ENCODE measurements at regions of chr3 and their contacts with region 1.

Region 1: DNA sequence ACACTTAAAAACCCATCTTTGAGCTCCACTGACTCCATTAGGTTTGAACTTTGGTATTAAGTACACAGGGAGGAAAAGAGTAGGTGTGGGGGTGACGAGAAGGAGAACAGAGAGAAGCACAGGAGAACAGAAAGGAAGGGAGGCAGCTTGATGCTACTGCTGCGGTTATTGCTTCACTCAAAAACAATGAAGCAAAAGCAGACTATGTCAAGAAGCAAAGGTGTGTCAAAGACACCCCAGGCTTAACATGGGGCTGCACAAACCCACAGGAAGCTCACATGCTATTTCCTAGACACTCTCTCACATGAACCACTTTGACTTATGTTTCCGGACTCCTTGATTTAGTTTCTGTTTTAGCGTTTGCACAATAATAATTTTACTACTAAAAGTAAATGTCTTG is 961.0 kb upstream of the CFAP20DC start:
- DNase-seq: peak; percentile 17 to 93 (median 88)
- ATAC-seq: peak; percentile 98
- H3K4me3 ChIP-seq: peak overlapping the region; percentile 47
- H3K4me3 Mint-ChIP-seq: peak overlapping the region; percentile 78 to 97 (median 84)
- H3K27ac ChIP-seq: peak overlapping the region; percentile 77
- H3K27ac Mint-ChIP-seq: peak overlapping the region; percentile 91 to 100 (median 95)
- H3K4me1 ChIP-seq: peaks cover 57 to 91% of the 10 kb centered on the region in 2 donors
- H3K4me1 Mint-ChIP-seq: peaks cover 29 to 100% (median 91%) of the 10 kb centered on the region in 7 donors
- H3K27me3 ChIP-seq: no peaks in the 10 kb centered on the region
- H3K27me3 Mint-ChIP-seq: no peaks in the 10 kb centered on the region

Region 2: GRCh38 chr3:59450946-59451763 is 559.6 kb before region 1 on chr3:
- CTCF ChIA-PET with region 1: no interaction called
- POLR2A ChIA-PET with region 1: interaction called, 5 read pairs
- intact Hi-C with region 1: loop called (anchors 1 to 10 kb)
- DNase-seq: peak in 8 of 9 donors; percentile 58 to 93 (median 86)
- ATAC-seq: peak; percentile 95
- H3K4me3 ChIP-seq: peak overlapping the region; percentile 30
- H3K4me3 Mint-ChIP-seq: peak overlapping the region; percentile 59 to 83 (median 77)
- H3K27ac ChIP-seq: peak overlapping the region; percentile 76
- H3K27ac Mint-ChIP-seq: peak overlapping the region; percentile 90 to 100 (median 97)
- H3K4me1 ChIP-seq: peaks cover 45 to 72% of the 10 kb centered on the region in 2 donors
- H3K4me1 Mint-ChIP-seq: peaks cover 52 to 94% (median 79%) of the 10 kb centered on the region in 7 donors
- H3K27me3 ChIP-seq: no peaks in the 10 kb centered on the region
- H3K27me3 Mint-ChIP-seq: no peaks in the 10 kb centered on the region

Region 3: DNA sequence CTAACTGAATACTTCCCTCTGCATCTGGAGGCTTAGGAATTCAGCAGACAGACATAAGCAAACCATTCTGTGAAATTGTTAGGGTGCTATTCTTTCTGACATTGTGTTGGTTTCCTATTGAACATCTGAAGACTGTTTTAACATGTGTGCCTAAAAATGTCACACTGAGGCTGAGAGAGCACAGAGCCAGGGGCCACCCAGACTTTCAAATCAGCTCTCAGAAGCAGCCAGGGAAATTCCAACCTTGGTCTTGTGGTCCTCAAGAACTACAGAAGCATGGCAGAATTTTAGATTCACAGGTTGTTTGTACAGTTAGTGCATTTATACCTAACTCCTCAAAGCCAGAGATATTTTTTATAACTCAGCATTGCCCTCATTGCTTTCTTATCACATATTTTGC is 31.8 kb before region 1 on chr3:
- CTCF ChIA-PET with region 1: interaction called, 4 read pairs
- POLR2A ChIA-PET with region 1: interaction called, 3 read pairs
- intact Hi-C with region 1: loop called in 1 of 2 experiments (anchors 2 kb)
- DNase-seq: peak in 4 of 9 donors; percentile 32 to 54 (median 39)
- ATAC-seq: peak; percentile 64
- H3K4me3 ChIP-seq: no peak overlapping the region
- H3K4me3 Mint-ChIP-seq: peak overlapping the region; percentile 7 to 74 (median 56)
- H3K27ac ChIP-seq: peak overlapping the region; percentile 47
- H3K27ac Mint-ChIP-seq: peak overlapping the region; percentile 33 to 96 (median 78)
- H3K4me1 ChIP-seq: peaks cover 0 to 55% of the 10 kb centered on the region in 2 donors
- H3K4me1 Mint-ChIP-seq: peaks cover 20 to 94% (median 89%) of the 10 kb centered on the region in 7 donors
- H3K27me3 ChIP-seq: no peaks in the 10 kb centered on the region
- H3K27me3 Mint-ChIP-seq: no peaks in the 10 kb centered on the region

Region 4: DNA sequence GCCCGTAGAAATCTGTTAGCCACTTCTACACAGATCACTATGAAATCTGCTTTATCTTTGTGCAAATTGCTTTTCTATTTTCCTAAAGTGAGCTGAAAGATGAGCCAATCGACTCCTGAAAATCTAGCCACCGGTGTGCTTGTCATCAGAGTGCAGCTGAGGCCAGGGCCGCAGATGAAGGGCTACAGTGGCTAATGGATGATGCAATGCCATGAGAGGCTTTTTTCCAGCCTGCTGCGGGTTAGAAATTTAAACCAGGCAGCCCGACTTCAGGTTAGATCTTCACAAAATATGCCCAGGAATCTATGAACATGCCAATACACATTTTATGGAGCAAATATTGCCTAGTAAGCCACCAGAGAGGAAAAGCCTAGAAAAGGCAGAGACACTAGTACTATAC is 12.7 kb before region 1 on chr3:
- CTCF ChIA-PET with region 1: interaction called, 5 read pairs
- POLR2A ChIA-PET with region 1: interaction called, 48 read pairs
- intact Hi-C with region 1: loop called in 1 of 2 experiments (anchors 1 kb)
- DNase-seq: no peak
- ATAC-seq: no peak
- H3K4me3 ChIP-seq: no peak overlapping the region
- H3K4me3 Mint-ChIP-seq: peak overlapping the region in 3 of 10 donors; percentile 13 to 52 (median 21)
- H3K27ac ChIP-seq: no peak overlapping the region
- H3K27ac Mint-ChIP-seq: peak overlapping the region in 7 of 9 donors; percentile 19 to 78 (median 67)
- H3K4me1 ChIP-seq: peaks cover 0 to 82% of the 10 kb centered on the region in 2 donors
- H3K4me1 Mint-ChIP-seq: peaks cover 30 to 98% (median 89%) of the 10 kb centered on the region in 7 donors
- H3K27me3 ChIP-seq: no peaks in the 10 kb centered on the region
- H3K27me3 Mint-ChIP-seq: no peaks in the 10 kb centered on the region

Region 5: DNA sequence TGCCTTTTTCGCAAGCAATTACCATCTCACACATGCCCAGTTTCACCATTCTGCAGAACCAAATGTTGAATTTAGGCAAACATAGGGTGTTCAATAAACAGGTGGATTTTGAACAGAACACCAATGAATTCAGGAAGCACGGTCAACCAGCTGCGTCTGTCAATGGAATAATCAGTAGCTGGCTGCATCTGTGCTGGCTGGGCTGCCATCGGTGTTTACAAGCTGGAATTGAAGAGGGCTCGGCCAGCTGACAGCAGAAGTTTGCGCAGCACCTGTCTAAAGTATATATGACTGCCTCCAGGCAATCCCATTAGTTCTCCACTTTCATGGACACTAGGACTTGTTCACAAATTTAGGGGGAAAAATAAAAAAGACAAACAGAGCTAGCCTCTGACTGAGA is 35.4 kb after region 1 on chr3:
- CTCF ChIA-PET with region 1: interaction called, 4 read pairs
- POLR2A ChIA-PET with region 1: interaction called, 12 read pairs
- intact Hi-C with region 1: loop called (anchors 1 kb)
- DNase-seq: no peak
- ATAC-seq: no peak
- H3K4me3 ChIP-seq: no peak overlapping the region
- H3K4me3 Mint-ChIP-seq: peak overlapping the region in 7 of 10 donors; percentile 2 to 66 (median 42)
- H3K27ac ChIP-seq: peak overlapping the region; percentile 15
- H3K27ac Mint-ChIP-seq: peak overlapping the region; percentile 27 to 99 (median 94)
- H3K4me1 ChIP-seq: peaks cover 6 to 50% of the 10 kb centered on the region in 2 donors
- H3K4me1 Mint-ChIP-seq: peaks cover 26 to 96% (median 90%) of the 10 kb centered on the region in 7 donors
- H3K27me3 ChIP-seq: no peaks in the 10 kb centered on the region
- H3K27me3 Mint-ChIP-seq: no peaks in the 10 kb centered on the region

Region 6: GRCh38 chr3:61251174-61251972 is 1240.6 kb after region 1 on chr3 and contains the start of gene FHIT:
- CTCF ChIA-PET with region 1: no interaction called
- POLR2A ChIA-PET with region 1: no interaction called
- intact Hi-C with region 1: loop called in 1 of 2 experiments (anchors 2 kb)
- DNase-seq: peak; percentile 73 to 89 (median 87)
- ATAC-seq: peak; percentile 96
- H3K4me3 ChIP-seq: peak within 1 kb of the TSS; percentile 83
- H3K4me3 Mint-ChIP-seq: peak within 1 kb of the TSS; percentile 83 to 94 (median 92)
- H3K27ac ChIP-seq: peak within 1 kb of the TSS; percentile 80
- H3K27ac Mint-ChIP-seq: peak within 1 kb of the TSS; percentile 74 to 95 (median 84)
- H3K4me1 ChIP-seq: peaks cover 11 to 13% of the 10 kb centered on the region in 2 donors
- H3K4me1 Mint-ChIP-seq: peaks cover 10 to 27% (median 25%) of the 10 kb centered on the region in 7 donors
- H3K27me3 ChIP-seq: no peaks in the 10 kb centered on the region
- H3K27me3 Mint-ChIP-seq: peaks cover 0 to 12% (median 1%) of the 10 kb centered on the region in 5 donors
- total RNA-seq, gene FHIT: 53.4 to 230 (median 191) TPM

Region 7: GRCh38 chr3:61673651-61674050 is 1662.9 kb after region 1 on chr3:
- CTCF ChIA-PET with region 1: no interaction called
- POLR2A ChIA-PET with region 1: no interaction called
- intact Hi-C with region 1: no loop called
- DNase-seq: no peak
- ATAC-seq: no peak
- H3K4me3 ChIP-seq: no peak overlapping the region
- H3K4me3 Mint-ChIP-seq: no peak overlapping the region
- H3K27ac ChIP-seq: no peak overlapping the region
- H3K27ac Mint-ChIP-seq: no peak overlapping the region
- H3K4me1 ChIP-seq: no peaks in the 10 kb centered on the region
- H3K4me1 Mint-ChIP-seq: peaks cover 0 to 2% (median 0%) of the 10 kb centered on the region in 7 donors
- H3K27me3 ChIP-seq: no peaks in the 10 kb centered on the region
- H3K27me3 Mint-ChIP-seq: no peaks in the 10 kb centered on the region

Measured in naive thymus-derived CD4-positive, alpha-beta T cell (primary cell).